GM12878 (cell line): ENCODE measurements at regions of chr1 and their contacts with region 1.

Region 1: DNA sequence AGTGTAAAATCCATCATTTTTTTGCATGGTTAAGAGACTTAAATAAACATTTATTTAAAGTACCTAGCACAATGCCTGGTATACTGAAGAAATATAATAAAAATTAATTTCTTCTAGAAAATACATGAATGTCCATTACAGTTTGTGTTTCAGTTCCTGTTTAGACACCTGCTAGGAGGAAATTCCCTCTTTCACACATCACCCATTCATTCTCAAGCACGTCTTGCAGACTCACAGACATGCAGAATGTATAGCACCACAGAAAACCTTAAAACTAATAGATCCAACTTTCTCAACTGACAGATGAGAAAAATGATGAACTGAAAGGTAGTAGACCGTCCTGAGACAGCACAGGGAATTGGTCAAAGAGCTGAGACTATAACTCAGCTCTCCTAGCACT is 172.2 kb upstream of the C8B start:
- DNase-seq: peak; percentile 9
- ATAC-seq: peak; percentile 94
- H3K4me3 ChIP-seq: no peak overlapping the region
- H3K27ac ChIP-seq: no peak overlapping the region
- H3K4me1 ChIP-seq: no peaks in the 10 kb centered on the region
- H3K27me3 ChIP-seq: 0 out of 4 replicates have a peak, but pooled peaks cover 0 to under 1% of the 10 kb centered on the region in 2 experiments
- CTCF ChIP-seq: no peak
- EP300 ChIP-seq: peak; percentile 71 to 82; a peak in 3 of 4 replicates
- POLR2A ChIP-seq: no peak
- RAD21 ChIP-seq: no peak

Region 2: DNA sequence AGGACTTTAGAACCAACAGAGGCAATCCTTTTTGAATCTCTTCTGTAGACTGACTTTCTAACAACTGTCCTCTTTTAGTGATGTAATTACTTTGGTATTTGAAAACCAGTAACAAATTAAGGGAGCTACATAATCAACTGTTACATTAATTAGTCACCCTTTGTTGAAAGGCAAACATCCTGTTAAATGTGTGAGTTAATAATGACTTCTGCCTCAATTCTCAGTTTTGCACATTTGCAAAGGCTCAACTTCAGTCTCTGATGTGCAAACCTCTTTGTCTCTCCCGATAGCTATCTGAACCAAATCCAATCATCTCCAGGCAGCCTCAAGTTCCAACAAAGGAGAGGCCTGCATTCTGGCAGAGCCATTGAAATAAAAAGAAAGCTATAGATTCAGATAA is 36.8 kb before region 1 on chr1:
- CTCF ChIA-PET with region 1: no interaction called
- POLR2A ChIA-PET with region 1: no interaction called
- RAD21 ChIA-PET with region 1: no interaction called
- SMC1A ChIA-PET with region 1: no interaction called
- in situ Hi-C with region 1: no loop called
- intact Hi-C with region 1: no loop called
- DNase-seq: no peak
- ATAC-seq: no peak
- H3K4me3 ChIP-seq: no peak overlapping the region
- H3K27ac ChIP-seq: no peak overlapping the region
- H3K4me1 ChIP-seq: no peaks in the 10 kb centered on the region
- H3K27me3 ChIP-seq: no peaks in the 10 kb centered on the region; a peak in 1 of 4 replicates
- CTCF ChIP-seq: no peak
- EP300 ChIP-seq: no peak
- POLR2A ChIP-seq: no peak
- RAD21 ChIP-seq: no peak

Region 3: DNA sequence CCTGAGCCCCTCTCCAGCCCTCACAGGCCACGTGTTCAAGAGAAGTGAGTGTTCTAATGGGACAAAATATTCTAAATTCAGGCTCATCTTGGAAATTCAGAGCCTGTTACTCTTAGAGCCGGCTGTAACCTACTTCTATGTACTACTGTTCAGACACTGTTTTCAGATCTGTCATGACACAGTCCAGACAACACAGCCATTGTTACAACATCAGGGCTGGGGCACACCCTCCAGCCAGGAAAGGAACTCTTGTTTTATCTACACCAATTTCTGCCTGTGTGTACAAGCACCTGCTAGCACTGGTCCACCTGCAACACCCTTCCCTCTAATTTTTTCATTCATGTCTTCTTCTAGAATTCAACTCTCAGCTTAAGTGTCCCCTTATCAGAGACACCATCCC is 26.8 kb before region 1 on chr1:
- CTCF ChIA-PET with region 1: no interaction called
- POLR2A ChIA-PET with region 1: no interaction called
- RAD21 ChIA-PET with region 1: no interaction called
- SMC1A ChIA-PET with region 1: no interaction called
- in situ Hi-C with region 1: no loop called
- intact Hi-C with region 1: no loop called
- DNase-seq: no peak
- ATAC-seq: no peak
- H3K4me3 ChIP-seq: no peak overlapping the region
- H3K27ac ChIP-seq: no peak overlapping the region
- H3K4me1 ChIP-seq: no peaks in the 10 kb centered on the region
- H3K27me3 ChIP-seq: no peaks in the 10 kb centered on the region
- CTCF ChIP-seq: no peak
- EP300 ChIP-seq: no peak
- POLR2A ChIP-seq: no peak
- RAD21 ChIP-seq: no peak

Region 4: DNA sequence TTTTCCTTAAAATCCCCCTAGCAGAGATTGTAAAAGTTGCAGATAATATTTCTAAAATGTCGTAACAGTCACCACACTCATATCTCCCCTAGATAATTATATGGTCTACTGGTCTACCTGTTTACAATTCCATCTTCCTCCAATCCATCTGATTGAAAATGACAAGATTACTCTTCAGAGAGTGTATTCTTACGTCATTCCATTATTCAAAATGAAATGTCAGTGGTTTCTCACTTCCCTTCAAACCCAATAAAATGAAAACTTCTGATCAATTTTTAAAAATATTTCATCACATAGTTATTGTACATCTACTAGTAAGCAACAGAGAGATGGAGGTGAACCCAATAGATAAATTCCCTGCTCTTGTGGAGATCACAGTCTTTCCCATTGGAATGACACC is 30.0 kb after region 1 on chr1:
- CTCF ChIA-PET with region 1: no interaction called
- POLR2A ChIA-PET with region 1: no interaction called
- RAD21 ChIA-PET with region 1: no interaction called
- SMC1A ChIA-PET with region 1: no interaction called
- in situ Hi-C with region 1: no loop called
- intact Hi-C with region 1: loop called (anchors 1 kb)
- DNase-seq: no peak
- ATAC-seq: peak; percentile 88
- H3K4me3 ChIP-seq: no peak overlapping the region
- H3K27ac ChIP-seq: no peak overlapping the region
- H3K4me1 ChIP-seq: no peaks in the 10 kb centered on the region; the same call in 1 of the 2 replicates
- H3K27me3 ChIP-seq: no peaks in the 10 kb centered on the region
- CTCF ChIP-seq: no peak
- EP300 ChIP-seq: peak in 1 of 2 experiments; percentile 79; a peak in 1 of 4 replicates
- POLR2A ChIP-seq: no peak
- RAD21 ChIP-seq: no peak